ENCODE measurements at regions of chr10 and their contacts with region 1.

Region 1: DNA sequence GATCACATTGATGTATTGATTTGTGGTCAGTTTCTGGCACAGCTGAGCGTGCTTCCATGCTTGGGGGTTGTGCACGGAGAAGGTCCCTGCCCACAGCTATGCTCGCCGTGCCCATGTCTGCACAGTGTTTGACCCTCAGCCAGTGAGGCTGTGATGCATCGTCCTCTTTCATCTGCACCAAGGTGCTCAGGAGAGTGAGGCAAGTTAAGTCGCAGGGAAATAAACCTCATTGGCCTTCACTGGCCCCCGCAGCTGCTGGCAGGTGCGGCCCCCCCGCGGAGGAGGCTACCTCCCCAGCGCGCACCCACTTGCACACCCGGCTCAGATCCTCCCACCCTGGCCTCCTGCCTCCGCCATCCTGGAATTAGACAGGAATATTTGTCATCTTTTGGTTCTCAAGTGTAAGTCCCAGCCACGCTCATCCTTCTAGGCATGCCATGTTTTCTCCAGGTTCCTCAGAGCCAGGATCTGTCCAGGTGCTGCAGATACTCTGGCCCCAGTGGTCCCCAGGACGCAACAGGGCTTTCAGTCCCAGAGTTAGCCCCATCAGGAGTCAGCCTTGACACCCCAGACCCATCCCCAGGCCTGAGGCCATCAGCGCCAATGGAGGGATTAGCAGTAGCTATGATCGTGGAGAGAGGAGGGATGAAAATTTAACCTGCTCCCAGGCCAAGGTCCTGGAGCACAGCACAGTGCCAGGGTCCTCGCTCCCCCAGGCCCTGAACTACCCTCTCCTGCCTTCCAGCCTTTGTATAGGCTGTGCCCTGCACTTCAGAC is 93.7 kb downstream of the OAT start:
- DNase-seq: peak in 1 of 2 donors; percentile 60
- H3K4me3 ChIP-seq: no peak overlapping the region
- H3K27ac ChIP-seq: no peak overlapping the region
- H3K4me1 ChIP-seq: peaks cover 0 to 34% (median 19%) of the 10 kb centered on the region in 4 donors
- H3K27me3 ChIP-seq: no peaks in the 10 kb centered on the region
- CTCF ChIP-seq: no peak

Region 2: GRCh38 chr10:124299696-124300095 is 25.3 kb before region 1 on chr10:
- intact Hi-C with region 1: loop called (anchors 1 kb)
- DNase-seq: peak in 1 of 2 donors; percentile 25
- H3K4me3 ChIP-seq: no peak overlapping the region
- H3K27ac ChIP-seq: no peak overlapping the region
- H3K4me1 ChIP-seq: peaks cover 0 to 7% (median 3%) of the 10 kb centered on the region in 4 donors
- H3K27me3 ChIP-seq: no peaks in the 10 kb centered on the region
- CTCF ChIP-seq: no peak